Activated CD4-positive, alpha-beta T cell treated with anti-CD3 and anti-CD28 coated beads for 36 hours (primary cell): ENCODE measurements at regions of chr14 and their contacts with region 1.

Region 1: GRCh38 chr14:64779472-64779871 is 75.2 kb downstream of the PLEKHG3 start:
- DNase-seq: no peak
- ATAC-seq: no peak
- H3K4me3 Mint-ChIP-seq: no peak overlapping the region
- H3K27ac Mint-ChIP-seq: no peak overlapping the region
- H3K4me1 Mint-ChIP-seq: no peaks in the 10 kb centered on the region
- H3K27me3 Mint-ChIP-seq: no peaks in the 10 kb centered on the region

Region 2: GRCh38 chr14:64812217-64812811 is 32.8 kb after region 1 on chr14:
- CTCF ChIA-PET with region 1: no interaction called
- POLR2A ChIA-PET with region 1: no interaction called
- intact Hi-C with region 1: no loop called
- DNase-seq: peak; percentile 67
- ATAC-seq: peak; percentile 78
- H3K4me3 Mint-ChIP-seq: no peak overlapping the region
- H3K27ac Mint-ChIP-seq: no peak overlapping the region
- H3K4me1 Mint-ChIP-seq: peaks cover 5% of the 10 kb centered on the region
- H3K27me3 Mint-ChIP-seq: peaks cover 4% of the 10 kb centered on the region

Region 3: DNA sequence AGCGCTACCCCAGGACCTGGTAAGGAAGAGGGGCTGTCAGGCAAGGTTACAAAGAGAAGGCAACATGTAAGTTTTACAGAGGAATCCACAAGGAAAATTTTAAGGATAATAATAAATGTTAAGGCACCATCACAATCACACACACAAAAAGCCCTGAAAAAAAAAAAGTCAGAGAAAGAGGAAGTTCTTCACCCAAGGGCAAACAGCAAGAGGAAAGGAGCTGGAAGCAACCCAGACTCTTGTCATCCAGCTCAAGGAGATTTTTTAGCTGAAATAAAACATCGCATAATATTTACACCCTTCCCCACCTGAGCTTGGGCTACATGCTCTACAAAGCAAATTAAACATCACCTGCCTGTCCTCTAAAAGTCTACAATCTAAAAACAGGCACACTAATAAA is 90.7 kb after region 1 on chr14:
- CTCF ChIA-PET with region 1: no interaction called
- POLR2A ChIA-PET with region 1: interaction called, 14 read pairs
- intact Hi-C with region 1: no loop called
- DNase-seq: no peak
- ATAC-seq: no peak
- H3K4me3 Mint-ChIP-seq: no peak overlapping the region
- H3K27ac Mint-ChIP-seq: no peak overlapping the region
- H3K4me1 Mint-ChIP-seq: no peaks in the 10 kb centered on the region
- H3K27me3 Mint-ChIP-seq: peaks cover 29% of the 10 kb centered on the region